ENCODE measurements at regions of chr2 and their contacts with region 1.

Region 1: GRCh38 chr2:237474931-237475703 is 11.9 kb upstream of the MLPH start:
- DNase-seq: peak; percentile 86 to 94 (median 90)
- ATAC-seq: peak; percentile 77
- H3K4me3 ChIP-seq: peak overlapping the region; percentile 54
- H3K27ac ChIP-seq: peak overlapping the region; percentile 90 to 98
- H3K4me1 ChIP-seq: peaks cover 23 to 33% of the 10 kb centered on the region in 2 donors
- H3K27me3 ChIP-seq: peaks cover 0 to 32% of the 10 kb centered on the region in 2 donors
- CTCF ChIP-seq: peak; percentile 82 to 85

Region 2: DNA sequence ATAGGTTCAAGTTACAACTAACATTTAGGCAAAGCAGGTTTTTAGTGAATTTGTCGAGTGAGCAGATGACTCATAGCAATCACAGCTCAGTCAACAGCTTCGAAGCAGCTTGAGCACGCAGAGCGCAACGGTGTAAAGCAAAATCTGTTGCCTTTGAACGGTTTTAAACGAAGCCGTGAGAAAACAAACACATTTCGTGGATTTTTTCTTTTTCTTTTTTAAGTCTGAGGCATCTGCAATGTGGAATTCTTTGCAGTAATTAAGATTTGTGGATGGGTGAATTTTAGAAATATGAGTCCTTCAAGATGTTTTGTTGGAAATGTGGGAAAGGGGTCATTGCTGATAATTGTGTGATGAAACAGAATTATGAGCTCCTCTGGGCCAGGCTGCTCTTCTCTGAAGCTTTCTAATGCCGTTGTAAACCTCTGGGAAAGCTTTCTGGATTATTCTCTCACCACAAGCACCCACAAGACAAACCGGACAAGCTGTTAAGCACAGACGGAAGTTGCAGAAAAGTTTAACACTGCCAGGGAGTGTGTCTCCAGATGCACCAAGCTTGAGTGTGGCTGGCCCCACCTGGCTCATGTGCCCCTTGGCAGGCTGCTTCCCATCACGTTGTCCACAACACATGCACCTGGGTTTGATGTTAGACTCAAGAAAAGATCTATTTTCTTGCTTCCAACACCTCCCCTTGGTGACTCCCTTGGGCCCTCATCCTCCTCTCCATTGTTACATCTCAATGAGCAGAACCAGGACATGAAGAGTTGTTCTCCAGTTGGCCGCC is 680.8 kb before region 1 on chr2:
- intact Hi-C with region 1: no loop called
- DNase-seq: peak in 1 of 4 donors; percentile 57
- ATAC-seq: no peak
- H3K4me3 ChIP-seq: no peak overlapping the region
- H3K27ac ChIP-seq: no peak overlapping the region
- H3K4me1 ChIP-seq: no peaks in the 10 kb centered on the region
- H3K27me3 ChIP-seq: peaks cover 0 to 38% of the 10 kb centered on the region in 2 donors
- CTCF ChIP-seq: no peak

Region 3: GRCh38 chr2:237122214-237122666 is 352.9 kb before region 1 on chr2:
- intact Hi-C with region 1: loop called in 1 of 2 experiments (anchors 10 kb)
- DNase-seq: peak; percentile 15 to 85 (median 68)
- ATAC-seq: peak; percentile 97
- H3K4me3 ChIP-seq: no peak overlapping the region
- H3K27ac ChIP-seq: no peak overlapping the region
- H3K4me1 ChIP-seq: peaks cover 0 to 10% of the 10 kb centered on the region in 2 donors
- H3K27me3 ChIP-seq: no peaks in the 10 kb centered on the region
- CTCF ChIP-seq: peak; percentile 35 to 67

Region 4: DNA sequence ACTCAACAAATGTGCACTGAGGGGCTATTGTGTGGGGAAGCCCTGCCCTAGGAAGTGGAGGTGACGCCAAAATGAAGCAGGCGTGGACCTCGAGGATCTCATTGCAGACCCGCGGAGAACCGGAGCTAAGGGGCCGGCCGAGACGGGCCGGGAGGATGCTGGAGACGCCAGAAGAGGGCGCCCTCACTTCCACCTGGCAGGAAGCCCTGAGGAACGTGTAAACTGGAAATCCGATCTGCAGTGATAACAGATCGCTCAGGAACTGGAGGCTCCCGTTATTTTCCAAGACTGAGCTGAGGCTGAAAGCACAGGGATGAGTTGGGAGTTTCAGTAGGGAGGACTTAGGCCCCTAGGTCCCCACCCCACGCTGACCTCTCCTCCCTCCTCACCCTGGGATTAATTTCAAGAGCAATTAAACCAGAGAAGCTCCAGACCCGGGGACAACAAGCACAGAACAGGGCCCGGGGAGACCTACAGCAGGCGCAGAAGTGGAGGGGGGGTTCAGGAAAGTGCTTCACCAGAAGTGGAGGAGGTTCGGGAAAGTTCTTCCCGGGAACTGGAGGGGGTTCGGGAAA is 53.5 kb before region 1 on chr2:
- intact Hi-C with region 1: loop called in 1 of 2 experiments (anchors 10 kb)
- DNase-seq: peak; percentile 76 to 90 (median 84)
- ATAC-seq: peak; percentile 97
- H3K4me3 ChIP-seq: no peak overlapping the region
- H3K27ac ChIP-seq: peak overlapping the region in 1 of 2 donors; percentile 57
- H3K4me1 ChIP-seq: peaks cover 6 to 11% of the 10 kb centered on the region in 2 donors
- H3K27me3 ChIP-seq: peaks cover 0 to 5% of the 10 kb centered on the region in 2 donors
- CTCF ChIP-seq: peak; percentile 75 to 87